Left ventricle myocardium superior (tissue), 1 donor: ENCODE measurements at regions of chr1 and their contacts with region 1.

Region 1: GRCh38 chr1:61049850-61050540 is 32.4 kb upstream of the NFIA start:
- DNase-seq: peak; percentile 96
- ATAC-seq: peak; percentile 80

Region 2: GRCh38 chr1:59971464-59971911 is 1078.5 kb before region 1 on chr1:
- intact Hi-C with region 1: loop called (anchors 10 kb)
- DNase-seq: peak; percentile 77
- ATAC-seq: peak; percentile 84

Region 3: DNA sequence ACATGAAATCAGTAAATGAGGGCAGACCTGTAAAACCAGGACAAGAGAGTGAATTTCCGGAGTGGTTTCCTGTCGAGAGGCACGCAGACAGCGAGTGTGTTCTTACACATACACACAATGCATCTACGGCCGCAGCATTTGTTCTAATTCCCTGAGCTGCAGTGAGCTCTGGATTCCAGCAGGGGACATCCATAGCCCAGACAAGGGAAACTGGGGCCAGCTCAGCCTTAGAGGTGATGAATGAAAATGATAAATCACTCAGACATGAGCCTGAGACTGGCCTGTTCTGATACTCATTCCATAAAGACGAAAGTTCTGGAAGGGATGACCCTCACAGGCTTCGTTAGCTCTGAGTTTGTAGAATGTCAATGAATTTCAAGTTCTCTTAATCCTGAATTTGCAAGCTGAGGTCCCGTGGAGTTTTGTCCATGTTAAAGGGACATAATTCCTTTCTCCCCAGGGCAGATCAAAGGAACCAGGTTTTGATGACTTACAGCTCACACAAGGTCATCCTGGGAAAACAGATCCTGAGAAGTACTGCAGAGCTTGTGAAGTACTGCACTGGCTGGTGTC is 768.5 kb before region 1 on chr1:
- intact Hi-C with region 1: loop called (anchors 10 kb)
- DNase-seq: peak; percentile 55
- ATAC-seq: peak; percentile 92

Region 4: GRCh38 chr1:60978421-60979357 is 71.3 kb before region 1 on chr1:
- intact Hi-C with region 1: loop called (anchors 10 kb)
- DNase-seq: peak; percentile 42
- ATAC-seq: peak; percentile 35

Region 5: DNA sequence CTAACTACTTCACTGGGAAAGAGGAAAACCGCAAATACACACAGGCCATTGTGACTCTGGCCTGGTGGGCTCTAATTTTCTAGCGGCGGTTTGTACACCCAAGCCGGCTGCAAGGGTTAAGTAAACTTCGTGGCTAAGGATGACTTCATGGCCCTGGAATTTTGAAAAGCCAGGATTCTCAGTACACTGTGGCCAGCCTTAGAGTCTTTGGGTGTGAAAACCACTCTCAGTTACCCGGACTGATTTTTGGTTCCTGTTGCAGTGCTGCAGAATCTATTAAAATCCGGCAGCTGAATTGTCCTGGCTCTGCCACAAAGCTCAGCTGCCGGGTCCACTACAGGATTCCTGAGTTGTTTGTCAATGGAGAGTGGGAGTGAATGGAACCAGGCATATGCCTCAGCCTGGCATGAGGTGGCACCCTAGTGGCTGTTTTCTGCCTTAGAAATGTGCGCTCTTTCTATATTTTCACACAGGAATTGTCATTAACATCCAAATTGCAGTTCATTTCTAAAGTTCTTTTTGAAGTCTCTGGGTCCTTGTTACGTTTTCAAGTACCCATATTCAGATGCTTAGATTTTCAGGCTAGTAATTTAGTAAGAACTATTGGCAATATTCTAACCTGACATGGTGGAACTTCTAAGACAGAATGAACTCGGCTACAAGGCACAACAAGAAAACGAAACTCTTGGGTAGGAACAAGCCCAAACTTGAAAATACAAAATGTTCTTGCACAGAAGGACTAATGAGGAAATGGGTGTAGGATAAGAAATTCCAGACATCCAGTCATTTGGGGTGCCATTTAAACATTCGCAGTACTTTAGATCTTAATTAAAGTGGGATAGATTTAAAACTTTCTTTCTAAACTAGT is 288.2 kb after region 1 on chr1:
- intact Hi-C with region 1: loop called (anchors 5 kb)
- DNase-seq: peak; percentile 71
- ATAC-seq: peak; percentile 86

Region 6: DNA sequence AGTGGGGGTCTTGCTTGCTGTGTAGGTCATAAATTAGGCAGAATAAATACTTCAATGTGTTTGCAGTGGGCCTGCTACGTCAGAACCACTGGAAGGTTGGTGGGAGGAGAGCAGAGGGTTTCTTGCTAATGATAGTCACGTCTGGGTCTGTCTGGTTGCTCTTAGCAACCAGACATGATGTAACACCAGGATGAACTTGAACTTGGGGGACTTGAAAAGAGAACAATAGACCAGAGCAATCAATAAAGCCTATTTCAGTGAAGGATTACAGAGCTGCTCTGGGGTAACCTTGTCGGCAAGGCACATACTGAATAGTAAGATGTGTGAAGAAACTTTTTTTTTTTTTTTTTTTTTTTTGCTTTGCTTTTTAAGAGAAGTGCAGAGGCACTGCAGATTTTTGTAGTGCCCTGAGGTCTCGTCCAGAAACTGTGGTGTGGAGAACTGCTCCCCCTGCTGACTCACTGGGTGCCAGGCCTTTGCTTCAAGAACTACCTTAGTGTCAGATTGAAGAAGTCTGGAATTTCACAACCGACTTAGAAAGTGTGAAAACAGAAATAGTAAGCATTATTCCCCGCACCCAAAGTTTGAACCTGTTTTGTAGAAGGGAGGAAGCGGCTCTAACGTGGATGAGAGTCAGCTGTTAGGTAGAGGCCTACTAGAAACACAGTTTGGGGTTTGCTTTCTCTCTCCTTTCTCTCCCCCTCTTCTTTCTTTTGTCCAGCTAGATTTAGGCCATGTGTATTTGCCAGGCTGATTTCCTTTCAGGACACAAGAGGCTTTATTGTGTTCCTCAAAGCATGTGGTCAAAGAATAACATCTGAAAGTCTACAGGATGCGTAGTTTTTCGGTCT is 403.3 kb after region 1 on chr1:
- intact Hi-C with region 1: loop called (anchors 2 kb)
- DNase-seq: peak; percentile 88
- ATAC-seq: peak; percentile 78

Region 7: GRCh38 chr1:61588736-61589672 is 539.0 kb after region 1 on chr1:
- intact Hi-C with region 1: loop called (anchors 10 kb)
- DNase-seq: peak; percentile 62
- ATAC-seq: peak; percentile 84

Region 8: GRCh38 chr1:61692155-61692800 is 642.3 kb after region 1 on chr1:
- intact Hi-C with region 1: no loop called
- DNase-seq: no peak
- ATAC-seq: no peak